Right ventricle myocardium superior (tissue), 1 donor: ENCODE measurements at regions of chr1 and their contacts with region 1.

Region 1: DNA sequence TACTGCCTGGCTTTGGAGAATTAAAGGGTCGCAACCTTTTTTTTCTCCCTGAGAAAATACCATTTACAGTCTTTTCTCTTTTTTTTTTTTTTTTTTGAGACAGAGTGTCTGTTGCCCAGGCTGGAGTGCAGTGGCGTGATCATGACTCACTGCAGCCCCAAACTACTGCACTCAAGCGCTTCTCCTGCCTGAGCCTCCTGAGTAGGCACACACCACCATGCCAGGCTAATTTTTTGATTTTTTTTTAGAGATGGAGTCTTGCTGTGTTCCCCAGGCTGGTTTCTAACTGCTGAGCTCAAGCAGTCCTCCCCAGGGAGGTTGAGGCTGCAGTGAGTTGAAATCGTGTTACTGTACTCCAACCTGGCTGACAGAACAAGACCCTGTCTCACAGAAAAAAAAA is 24.6 kb downstream of the UBE4B start:
- DNase-seq: no peak
- ATAC-seq: peak; percentile 31

Region 2: DNA sequence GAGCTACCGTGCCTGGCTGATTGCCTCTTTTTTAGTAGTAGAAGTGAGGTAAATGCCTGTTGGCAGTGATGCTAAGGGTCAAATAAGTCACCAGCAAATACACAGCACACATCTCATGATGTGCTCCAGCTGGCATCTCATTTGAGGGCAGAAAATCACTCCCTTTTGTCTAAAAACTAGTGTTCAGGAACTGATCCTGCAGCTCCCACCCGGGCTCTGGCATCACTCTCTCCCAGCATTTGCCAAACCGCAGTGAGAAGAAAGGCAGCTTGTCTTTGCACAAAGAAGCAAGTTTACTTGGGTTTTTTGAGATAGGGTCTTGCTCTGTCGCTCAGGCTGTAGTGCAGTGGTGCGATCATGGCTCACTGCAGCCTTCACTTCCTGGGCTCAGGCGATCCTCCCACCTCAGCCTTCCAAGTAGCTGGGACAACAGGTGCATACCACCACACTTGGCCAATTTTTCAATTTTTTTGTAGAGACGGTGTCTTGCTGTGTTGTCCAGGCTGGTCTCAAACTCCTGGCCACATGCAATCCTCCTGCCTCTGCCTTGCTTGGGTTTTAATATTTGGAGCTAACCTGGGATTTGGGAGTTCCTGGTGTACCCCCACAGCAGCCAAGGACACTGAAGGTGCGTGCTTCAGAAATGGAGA is 56.2 kb before region 1 on chr1:
- intact Hi-C with region 1: no loop called
- DNase-seq: no peak
- ATAC-seq: no peak

Region 3: GRCh38 chr1:10014016-10014415 is 43.3 kb before region 1 on chr1:
- intact Hi-C with region 1: no loop called
- DNase-seq: no peak
- ATAC-seq: no peak

Region 4: GRCh38 chr1:10108134-10108663 is 50.9 kb after region 1 on chr1:
- intact Hi-C with region 1: loop called (anchors 10 kb)
- DNase-seq: no peak
- ATAC-seq: peak; percentile 77